ENCODE measurements at regions of chr17 and their contacts with region 1.

Region 1: DNA sequence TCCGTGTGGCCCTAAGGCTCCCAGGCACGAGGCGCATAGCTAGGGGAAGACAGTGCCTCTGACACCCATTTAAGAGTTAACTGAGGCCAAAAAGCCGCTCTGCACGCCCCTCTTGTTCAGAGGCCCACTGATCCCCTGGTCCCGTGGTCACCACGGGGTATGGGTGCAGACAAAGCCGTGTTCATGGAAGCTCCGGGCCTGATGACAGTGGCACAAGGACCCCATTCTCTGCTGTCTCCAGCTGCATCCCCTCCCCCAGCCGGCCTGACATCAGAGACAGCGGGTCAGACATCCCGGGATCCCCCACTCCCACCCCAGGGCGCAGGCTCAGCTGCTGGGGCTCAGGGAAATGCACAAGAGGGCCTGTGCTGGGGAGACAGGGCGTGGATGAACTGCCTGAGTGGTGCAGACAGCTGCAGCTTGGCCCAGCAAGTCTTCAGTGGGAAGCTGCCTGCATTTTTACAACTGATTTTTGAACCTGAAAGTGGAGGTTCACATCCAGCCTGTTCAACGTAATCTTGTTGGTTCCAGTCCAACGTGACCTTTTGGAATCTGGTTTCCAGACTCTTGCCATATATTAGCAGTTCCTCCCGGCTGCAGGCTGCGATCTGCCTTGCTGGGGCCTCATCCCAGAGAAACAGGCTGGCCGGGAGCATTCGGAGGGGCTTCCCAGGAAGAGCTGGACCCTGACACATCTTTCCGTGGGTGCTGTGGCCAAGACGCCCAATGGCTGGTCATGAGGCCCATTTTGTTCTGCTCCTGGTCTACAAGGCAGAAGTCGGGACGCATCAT is 9.7 kb upstream of the BAHCC1 start:
- DNase-seq: peak; percentile 52 to 100 (median 98)
- H3K4me3 ChIP-seq: peak overlapping the region in 58 of 59 donors; percentile 19 to 91 (median 76)
- H3K27ac ChIP-seq: peak overlapping the region; percentile 87 to 100 (median 99)
- H3K27me3 ChIP-seq: no peaks in the 10 kb centered on the region
- CTCF ChIP-seq: peak in 4 of 56 donors; percentile 14 to 23 (median 15)

Region 2: DNA sequence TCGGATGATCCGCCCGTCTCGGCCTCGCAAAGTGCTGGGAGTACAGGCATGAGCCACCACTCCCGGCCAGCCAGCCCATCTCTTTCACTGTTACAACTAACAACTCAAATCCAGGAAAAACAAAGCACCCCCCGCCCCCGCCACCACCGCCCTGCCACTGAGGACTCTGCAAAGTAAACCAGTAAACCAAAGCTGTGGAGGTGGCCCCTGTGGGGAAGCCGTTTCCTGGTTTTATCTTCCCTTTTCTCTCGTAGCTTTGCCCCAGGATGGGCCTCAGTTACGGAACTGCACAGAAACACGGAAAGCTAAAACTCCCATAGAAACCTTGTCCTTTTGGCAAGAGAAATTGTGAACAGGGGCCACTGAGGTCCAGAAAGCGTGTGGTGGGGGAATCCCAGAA is 376.4 kb before region 1 on chr17:
- intact Hi-C with region 1: no loop called
- DNase-seq: no peak
- H3K4me3 ChIP-seq: no peak overlapping the region
- H3K27ac ChIP-seq: no peak overlapping the region
- H3K27me3 ChIP-seq: peaks cover 0 to 12% (median 5%) of the 10 kb centered on the region in 45 donors
- CTCF ChIP-seq: no peak

Region 3: DNA sequence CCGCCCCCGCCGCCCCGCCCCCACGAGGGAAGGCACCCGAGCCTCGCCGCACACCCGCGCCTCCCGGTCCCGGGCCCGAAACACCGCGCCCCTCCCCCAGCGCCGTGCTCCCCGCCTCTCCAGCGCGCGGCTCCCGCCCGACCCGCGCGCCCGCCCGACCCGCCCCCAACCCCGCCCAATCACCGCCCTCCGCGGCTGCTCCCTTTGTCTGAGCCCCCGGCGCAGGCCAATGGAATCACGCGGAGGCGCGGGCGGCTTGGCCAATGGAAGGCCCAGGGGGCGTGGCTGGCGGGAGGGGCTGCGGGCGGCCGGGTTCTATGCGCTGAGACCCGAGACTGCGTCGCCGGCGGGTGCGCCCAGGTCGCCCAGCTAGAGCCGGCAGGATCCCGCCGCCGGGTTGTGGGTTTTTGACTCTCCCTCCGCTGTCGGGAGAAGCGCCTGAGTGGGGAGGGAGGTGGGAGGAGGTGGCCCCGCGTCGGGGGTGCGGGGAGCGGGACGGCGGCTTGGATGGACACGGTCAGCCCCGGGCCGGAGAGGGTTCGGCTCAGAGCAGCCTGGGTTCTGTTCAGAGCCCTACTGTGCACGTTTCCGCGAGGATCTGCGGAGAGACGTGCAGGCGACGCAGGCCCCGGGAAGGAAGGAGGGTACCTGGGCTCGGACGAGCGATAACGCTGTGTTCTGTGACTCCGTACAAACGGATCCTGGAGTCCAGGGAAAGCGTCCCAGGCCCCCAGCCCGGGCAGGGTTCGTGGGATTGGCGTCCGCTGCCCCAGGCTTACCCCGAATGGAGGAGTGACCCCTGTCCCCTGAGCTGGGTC is 39.2 kb before region 1 on chr17:
- intact Hi-C with region 1: loop called in 1 of 2 experiments (anchors 1 kb)
- DNase-seq: peak; percentile 97 to 100 (median 98)
- H3K4me3 ChIP-seq: peak overlapping the region; percentile 58 to 97 (median 76)
- H3K27ac ChIP-seq: peak overlapping the region in 57 of 59 donors; percentile 51 to 96 (median 88)
- H3K27me3 ChIP-seq: peaks cover 0 to 29% (median 6%) of the 10 kb centered on the region in 45 donors
- CTCF ChIP-seq: peak in 3 of 56 donors; percentile 17 to 29 (median 20)

Measured in dorsolateral prefrontal cortex (tissue), 120 donors.